ENCODE measurements at regions of chrX and their contacts with region 1.

Region 1: GRCh38 chrX:65528705-65529340 is 5.8 kb downstream of the LAS1L start:
- DNase-seq: peak; percentile 67
- CTCF ChIP-seq: peak; percentile 81

Region 2: GRCh38 chrX:65502618-65503017 is 26.2 kb before region 1 on chrX:
- CTCF ChIA-PET with region 1: interaction called, 10 read pairs
- POLR2A ChIA-PET with region 1: no interaction called
- DNase-seq: no peak
- CTCF ChIP-seq: no peak

Region 3: DNA sequence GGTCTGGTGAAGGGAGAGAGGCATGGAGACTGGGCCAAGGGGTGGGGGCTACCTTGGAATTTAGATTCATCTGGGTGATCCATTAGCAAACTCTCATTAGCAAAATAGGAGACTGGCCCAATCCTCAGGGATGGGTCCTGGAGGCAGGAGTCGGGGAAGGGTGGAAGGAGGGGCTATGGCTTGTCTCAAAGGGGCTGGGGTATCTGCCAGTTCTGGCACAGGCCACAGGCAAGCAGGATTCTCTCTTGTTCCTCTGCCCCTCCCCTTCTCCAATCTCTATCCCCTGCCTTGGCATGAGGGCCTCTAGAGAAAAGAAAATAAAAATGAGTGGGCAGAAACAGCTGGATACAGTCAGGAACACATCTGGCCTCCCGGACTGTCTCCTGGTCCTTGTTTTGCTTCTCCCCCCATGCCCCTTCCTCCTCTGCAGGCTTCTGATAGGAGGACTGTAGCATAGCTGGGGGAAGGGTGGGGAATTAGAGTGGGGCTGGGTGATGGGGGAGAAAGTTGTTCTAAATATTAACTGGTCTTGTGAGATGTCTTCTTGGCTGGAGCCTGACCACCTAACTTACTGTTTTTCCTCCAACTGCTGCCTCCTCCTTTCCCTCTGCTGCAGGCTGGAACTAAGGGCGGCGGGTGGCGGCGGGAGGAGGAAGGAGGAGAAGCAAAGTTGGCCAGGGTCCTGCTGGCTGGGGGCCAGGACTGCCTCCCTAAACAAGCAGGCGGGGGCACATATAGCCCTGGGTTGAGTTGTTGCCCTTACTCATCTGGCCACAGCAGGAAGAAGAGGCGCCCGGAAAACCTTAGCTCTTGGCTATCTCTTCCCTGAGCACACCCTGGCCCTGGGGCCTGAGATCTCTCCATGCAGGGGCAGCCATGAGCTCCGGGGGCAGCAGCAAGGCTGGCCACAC is 59.0 kb after region 1 on chrX:
- CTCF ChIA-PET with region 1: no interaction called
- POLR2A ChIA-PET with region 1: no interaction called
- DNase-seq: no peak
- CTCF ChIP-seq: no peak